ENCODE measurements at regions of chr2 and their contacts with region 1.

Region 1: DNA sequence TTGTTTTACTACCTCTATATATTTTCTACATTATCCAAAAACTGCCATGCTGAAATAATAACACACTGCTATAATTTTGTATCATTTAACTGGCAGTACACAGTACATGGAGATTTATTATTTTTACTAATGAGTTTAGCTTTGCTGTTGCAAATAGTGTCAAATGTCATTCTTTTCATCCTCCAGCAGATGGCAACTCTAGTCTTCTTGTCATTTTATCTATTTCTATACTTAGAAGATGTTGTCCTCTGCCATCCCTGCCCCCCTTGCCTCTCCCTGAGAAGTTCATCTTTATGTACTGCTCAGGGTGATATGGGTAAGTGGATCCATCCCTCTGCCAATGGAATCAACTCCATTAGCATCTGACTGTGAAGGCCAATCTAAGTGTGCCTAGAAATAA is 21.7 kb upstream of the LRRTM1 start:
- DNase-seq: no peak
- ATAC-seq: peak; percentile 39
- H3K4me3 ChIP-seq: no peak overlapping the region
- H3K27ac ChIP-seq: no peak overlapping the region
- H3K4me1 ChIP-seq: no peaks in the 10 kb centered on the region
- H3K27me3 ChIP-seq: peaks cover 0 to 32% of the 10 kb centered on the region in 2 donors
- CTCF ChIP-seq: peak in 1 of 2 donors; percentile 26

Region 2: DNA sequence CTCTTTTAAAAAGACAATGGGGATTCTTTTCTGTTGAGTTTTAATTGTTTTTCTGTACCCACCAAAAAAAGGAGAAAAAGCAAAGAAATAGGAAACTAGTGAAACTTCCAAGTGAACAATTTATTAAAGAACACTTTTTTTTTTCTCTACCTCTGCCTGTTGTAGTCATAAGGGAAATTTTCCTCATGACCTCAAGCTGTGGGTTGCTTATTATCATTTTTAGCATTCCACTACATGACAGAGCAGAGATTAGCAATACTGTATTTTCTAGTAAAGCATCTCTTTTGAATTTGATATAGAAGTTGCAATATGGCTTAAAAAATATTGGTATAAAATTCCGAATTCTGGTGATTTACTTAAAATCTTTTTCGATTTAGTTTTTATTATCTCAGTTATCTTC is 66.2 kb after region 1 on chr2:
- intact Hi-C with region 1: no loop called
- DNase-seq: no peak
- ATAC-seq: no peak
- H3K4me3 ChIP-seq: no peak overlapping the region
- H3K27ac ChIP-seq: no peak overlapping the region
- H3K4me1 ChIP-seq: no peaks in the 10 kb centered on the region
- H3K27me3 ChIP-seq: no peaks in the 10 kb centered on the region
- CTCF ChIP-seq: no peak

Region 3: DNA sequence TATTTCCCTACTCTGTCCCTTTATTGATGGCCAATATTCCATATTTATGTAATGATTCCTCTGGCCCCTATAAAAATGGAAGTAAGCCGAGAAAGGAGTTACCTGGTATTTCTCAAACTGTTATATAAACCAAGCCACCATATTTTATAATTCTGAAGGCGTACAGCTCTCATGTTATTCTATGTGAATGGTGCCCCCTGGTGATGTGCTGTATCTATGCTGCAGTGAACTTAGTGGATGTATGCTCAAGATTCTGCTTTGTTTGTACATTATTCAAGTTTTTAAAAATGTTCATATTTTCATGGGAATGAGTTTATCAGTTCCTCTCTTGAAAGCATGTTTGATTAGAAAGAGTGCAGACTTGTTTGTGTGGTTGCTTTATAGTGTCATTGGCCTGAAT is 172.9 kb after region 1 on chr2:
- intact Hi-C with region 1: loop called in 1 of 2 experiments (anchors 10 kb)
- DNase-seq: peak in 2 of 4 donors; percentile 26 to 61
- ATAC-seq: peak; percentile 81
- H3K4me3 ChIP-seq: no peak overlapping the region
- H3K27ac ChIP-seq: no peak overlapping the region
- H3K4me1 ChIP-seq: no peaks in the 10 kb centered on the region
- H3K27me3 ChIP-seq: no peaks in the 10 kb centered on the region
- CTCF ChIP-seq: peak in 1 of 2 donors; percentile 45